AG04450 (cell line): ENCODE measurements at regions of chr10 and their contacts with region 1.

Region 1: GRCh38 chr10:95308389-95309302 is 17.8 kb upstream of the PDLIM1 start:
- DNase-seq: peak; percentile 95
- H3K4me3 ChIP-seq: peak overlapping the region; percentile 23
- H3K27ac ChIP-seq: peak overlapping the region; percentile 89
- H3K27me3 ChIP-seq: no peaks in the 10 kb centered on the region
- CTCF ChIP-seq: no peak

Region 2: DNA sequence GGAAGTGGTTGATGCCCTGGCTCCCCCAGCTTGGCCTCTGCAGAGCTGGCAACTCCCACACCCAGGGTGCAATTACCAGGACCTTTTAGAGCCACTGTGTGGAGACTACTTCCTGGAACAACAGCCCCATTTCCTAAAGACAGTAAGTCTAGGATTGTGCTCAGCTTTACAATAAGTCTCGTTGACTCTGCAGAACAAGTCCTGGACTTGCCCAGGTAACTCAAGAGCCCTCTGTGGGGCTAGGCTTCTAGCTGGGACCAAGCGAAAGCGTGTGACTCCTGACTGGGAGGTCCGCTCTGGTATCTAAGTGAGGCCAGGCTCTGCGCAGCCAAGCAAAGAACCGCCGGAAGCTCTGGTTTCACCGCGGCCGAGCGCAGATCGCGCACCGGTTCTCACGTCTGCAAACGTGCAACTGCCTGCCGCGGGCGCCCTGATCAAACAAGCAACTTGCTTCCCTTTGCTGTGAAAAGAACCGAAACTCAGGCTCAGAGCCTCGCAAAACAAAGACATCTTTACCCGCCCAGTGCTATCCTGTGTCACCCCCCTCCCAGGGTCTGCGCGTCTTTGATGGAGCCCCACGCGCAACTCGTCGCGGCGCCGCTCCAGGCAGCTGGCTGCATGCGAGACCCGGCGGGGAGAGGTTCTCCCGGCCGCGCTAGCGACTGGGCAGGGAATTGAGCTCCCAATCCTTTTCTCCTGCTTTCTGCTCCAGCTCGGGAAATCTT is 13.5 kb before region 1 on chr10:
- CTCF ChIA-PET with region 1: no interaction called
- POLR2A ChIA-PET with region 1: interaction called, 10 read pairs
- DNase-seq: no peak
- H3K4me3 ChIP-seq: peak overlapping the region; percentile 44
- H3K27ac ChIP-seq: no peak overlapping the region
- H3K27me3 ChIP-seq: no peaks in the 10 kb centered on the region
- CTCF ChIP-seq: no peak

Region 3: DNA sequence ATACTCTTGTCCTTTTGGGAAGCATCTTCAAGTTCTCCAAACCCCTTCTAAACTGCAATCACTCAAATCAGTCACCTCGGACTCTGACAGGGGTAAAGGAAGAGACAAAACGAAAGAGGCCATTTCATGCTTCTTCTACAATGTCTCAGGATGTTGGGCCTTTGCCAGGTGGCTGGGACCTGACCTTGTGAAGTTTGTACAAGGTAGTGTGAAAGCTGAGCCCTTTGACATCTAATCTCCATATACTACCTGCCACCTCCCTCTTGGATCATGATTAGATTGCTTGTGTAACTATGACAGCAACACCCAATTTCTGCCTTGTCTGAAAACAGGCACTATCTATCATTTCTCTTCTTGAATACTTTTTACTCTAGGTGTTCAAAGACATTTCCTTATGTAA is 17.2 kb after region 1 on chr10:
- CTCF ChIA-PET with region 1: interaction called, 6 read pairs
- POLR2A ChIA-PET with region 1: interaction called, 10 read pairs
- DNase-seq: no peak
- H3K4me3 ChIP-seq: no peak overlapping the region
- H3K27ac ChIP-seq: no peak overlapping the region
- H3K27me3 ChIP-seq: no peaks in the 10 kb centered on the region
- CTCF ChIP-seq: no peak